Naive thymus-derived CD4-positive, alpha-beta T cell (primary cell): ENCODE measurements at regions of chr3 and their contacts with region 1.

Region 1: GRCh38 chr3:121834696-121835464 is at the starts of genes EAF2 and IQCB1:
- DNase-seq: peak; percentile 93 to 98 (median 97)
- ATAC-seq: peak; percentile 99
- H3K4me3 ChIP-seq: peak within 1 kb of the TSS; percentile 85
- H3K4me3 Mint-ChIP-seq: peak within 1 kb of the TSS; percentile 83 to 97 (median 93)
- H3K27ac ChIP-seq: peak within 1 kb of the TSS; percentile 89
- H3K27ac Mint-ChIP-seq: peak within 1 kb of the TSS; percentile 78 to 98 (median 92)
- H3K4me1 ChIP-seq: peaks cover 10 to 14% of the 10 kb centered on the region in 2 donors
- H3K4me1 Mint-ChIP-seq: peaks cover 32 to 65% (median 58%) of the 10 kb centered on the region in 7 donors
- H3K27me3 ChIP-seq: no peaks in the 10 kb centered on the region
- H3K27me3 Mint-ChIP-seq: no peaks in the 10 kb centered on the region
- total RNA-seq, gene EAF2: 6.4 to 16.1 (median 7.5) TPM
- total RNA-seq, gene IQCB1: 32.6 to 45.6 (median 35.8) TPM

Region 2: DNA sequence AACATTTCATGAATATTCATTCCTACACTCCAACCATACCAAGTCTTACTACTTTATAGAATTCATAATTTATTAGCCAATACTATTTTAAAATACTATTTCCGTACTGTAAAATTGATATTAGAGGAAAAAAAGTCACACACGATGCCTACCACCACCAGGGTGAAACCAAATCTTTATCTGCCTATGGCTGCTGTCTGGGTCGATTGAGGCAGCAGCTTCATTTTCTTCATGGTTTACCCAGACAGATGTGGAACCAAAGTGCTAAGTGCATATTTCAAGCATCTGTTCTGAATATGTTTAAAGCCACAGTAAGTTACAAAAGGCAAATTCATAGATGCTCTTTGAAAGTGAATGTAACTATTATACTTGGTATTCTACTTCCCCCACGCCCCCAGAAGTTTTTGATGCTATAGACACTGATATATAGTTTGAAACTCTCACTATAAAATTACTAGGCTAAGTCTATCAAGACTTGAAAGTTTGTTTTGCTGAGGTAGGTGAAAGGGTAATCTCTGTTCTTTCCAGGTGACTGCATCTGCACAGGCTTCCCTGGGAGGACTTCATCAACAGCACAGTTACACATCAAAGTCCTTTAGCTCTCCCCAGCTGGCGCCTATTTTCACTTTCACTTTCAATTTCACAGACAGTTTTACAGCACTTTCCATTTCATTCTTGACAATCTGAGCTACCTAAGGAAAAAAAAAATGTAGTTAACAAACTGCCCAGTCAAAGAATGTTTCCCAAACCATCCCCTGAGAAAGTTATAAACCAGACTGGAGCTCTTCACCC is 403.0 kb before region 1 on chr3:
- CTCF ChIA-PET with region 1: no interaction called
- POLR2A ChIA-PET with region 1: interaction called, 3 read pairs
- intact Hi-C with region 1: loop called (anchors 2 to 5 kb)
- DNase-seq: peak in 8 of 9 donors; percentile 36 to 80 (median 74)
- ATAC-seq: peak; percentile 89
- H3K4me3 ChIP-seq: peak overlapping the region; percentile 52
- H3K4me3 Mint-ChIP-seq: peak overlapping the region; percentile 46 to 84 (median 76)
- H3K27ac ChIP-seq: peak overlapping the region; percentile 33
- H3K27ac Mint-ChIP-seq: peak overlapping the region; percentile 48 to 92 (median 84)
- H3K4me1 ChIP-seq: peaks cover 0 to 9% of the 10 kb centered on the region in 2 donors
- H3K4me1 Mint-ChIP-seq: peaks cover 6 to 31% (median 24%) of the 10 kb centered on the region in 7 donors
- H3K27me3 ChIP-seq: no peaks in the 10 kb centered on the region
- H3K27me3 Mint-ChIP-seq: no peaks in the 10 kb centered on the region

Region 3: GRCh38 chr3:121796970-121797369 is 37.9 kb before region 1 on chr3:
- CTCF ChIA-PET with region 1: no interaction called
- POLR2A ChIA-PET with region 1: no interaction called
- intact Hi-C with region 1: loop called in 1 of 2 experiments (anchors 5 kb)
- DNase-seq: no peak
- ATAC-seq: no peak
- H3K4me3 ChIP-seq: no peak overlapping the region
- H3K4me3 Mint-ChIP-seq: no peak overlapping the region
- H3K27ac ChIP-seq: no peak overlapping the region
- H3K27ac Mint-ChIP-seq: no peak overlapping the region
- H3K4me1 ChIP-seq: no peaks in the 10 kb centered on the region
- H3K4me1 Mint-ChIP-seq: peaks cover 0 to 6% (median 0%) of the 10 kb centered on the region in 7 donors
- H3K27me3 ChIP-seq: no peaks in the 10 kb centered on the region
- H3K27me3 Mint-ChIP-seq: no peaks in the 10 kb centered on the region

Region 4: DNA sequence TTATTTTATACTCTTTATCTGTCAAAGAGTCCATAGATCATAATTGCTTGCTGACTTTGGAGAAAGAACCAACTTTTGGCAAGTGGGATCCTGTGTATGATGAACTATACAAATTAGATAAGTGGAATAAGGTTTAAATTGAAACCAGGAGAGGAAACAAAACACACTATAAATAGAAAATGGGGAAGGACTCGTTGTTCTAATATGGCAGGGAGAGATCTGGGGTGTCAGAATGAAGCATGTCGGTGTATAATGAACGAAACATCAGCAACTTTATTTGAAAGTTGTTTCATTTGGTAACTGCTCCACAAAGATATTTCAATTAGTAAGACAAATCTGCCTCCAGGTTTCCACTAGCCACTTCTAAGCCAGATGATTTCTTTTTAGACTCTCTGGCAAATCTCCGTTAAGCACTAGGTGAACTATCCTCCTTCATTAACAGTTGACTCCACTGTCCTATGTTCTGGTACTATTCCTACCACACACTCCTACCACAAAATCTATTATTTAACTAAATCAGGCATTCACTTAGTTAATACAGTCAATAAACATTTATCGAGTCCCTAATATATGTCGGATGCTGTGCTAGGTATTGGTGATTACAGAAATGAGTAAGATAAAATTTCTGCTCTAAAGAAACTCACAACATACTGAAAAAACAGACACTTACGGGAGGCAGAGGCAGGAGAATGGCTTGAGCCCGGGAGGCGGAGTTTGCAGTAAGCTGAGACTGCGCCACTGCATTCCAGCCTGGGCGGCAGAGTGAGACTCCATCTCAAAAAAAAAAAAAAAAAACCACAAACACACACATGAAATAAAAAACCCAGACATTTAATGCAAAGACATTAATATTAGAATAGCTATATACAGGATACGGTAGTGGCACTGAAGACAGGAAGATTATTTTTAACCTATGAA is 79.5 kb after region 1 on chr3:
- CTCF ChIA-PET with region 1: no interaction called
- POLR2A ChIA-PET with region 1: no interaction called
- intact Hi-C with region 1: no loop called
- DNase-seq: no peak
- ATAC-seq: no peak
- H3K4me3 ChIP-seq: no peak overlapping the region
- H3K4me3 Mint-ChIP-seq: no peak overlapping the region
- H3K27ac ChIP-seq: no peak overlapping the region
- H3K27ac Mint-ChIP-seq: no peak overlapping the region
- H3K4me1 ChIP-seq: no peaks in the 10 kb centered on the region
- H3K4me1 Mint-ChIP-seq: peaks cover 0 to 1% (median 0%) of the 10 kb centered on the region in 7 donors
- H3K27me3 ChIP-seq: no peaks in the 10 kb centered on the region
- H3K27me3 Mint-ChIP-seq: no peaks in the 10 kb centered on the region

Region 5: DNA sequence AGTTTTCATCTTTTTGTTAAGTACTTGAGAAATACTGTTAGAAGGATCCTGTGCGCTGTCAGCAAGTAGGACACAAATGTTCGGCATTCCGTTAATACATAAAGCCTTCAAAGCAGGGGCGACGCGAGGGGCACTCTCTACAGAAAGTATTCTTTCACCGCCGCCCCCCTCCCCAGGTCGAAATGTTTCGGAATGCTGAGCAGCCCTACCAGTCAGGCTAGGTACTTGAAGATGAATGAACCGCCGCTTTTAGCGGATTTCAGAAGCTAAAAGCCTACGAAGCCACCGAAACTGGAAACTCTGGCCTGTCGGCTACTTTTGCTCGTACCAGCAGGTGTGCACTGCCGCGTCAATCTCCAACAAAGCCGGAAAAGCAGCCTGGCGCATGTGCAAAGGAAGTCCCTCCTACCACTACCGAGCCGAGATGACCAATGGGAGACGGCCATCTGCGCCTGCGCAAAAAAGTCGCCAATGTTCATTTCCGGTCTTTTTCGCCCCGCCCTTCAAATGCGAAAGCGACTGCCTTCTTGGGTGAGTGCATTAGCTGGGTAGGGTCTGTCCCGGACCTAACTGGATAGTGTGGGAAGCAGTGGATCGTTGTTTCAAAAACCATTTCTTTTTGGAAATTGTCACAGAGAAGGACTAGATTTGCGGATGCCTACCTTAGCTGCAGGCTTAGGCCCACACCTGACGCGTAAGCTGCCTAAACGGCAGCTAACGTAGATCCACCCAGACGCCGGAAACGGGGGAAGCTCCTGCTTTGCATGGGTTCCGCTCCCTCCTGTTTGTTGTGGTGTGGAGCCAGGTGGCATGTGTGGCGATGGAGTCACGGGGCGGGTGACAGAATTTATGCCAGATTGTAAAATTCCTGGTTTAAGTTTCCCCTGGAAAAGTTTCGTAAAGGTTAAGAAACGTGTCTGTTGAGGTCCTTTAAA is 581.1 kb after region 1 on chr3 and contains the start of gene WDR5B:
- CTCF ChIA-PET with region 1: no interaction called
- POLR2A ChIA-PET with region 1: no interaction called
- intact Hi-C with region 1: loop called (anchors 1 kb)
- DNase-seq: peak; percentile 95 to 99 (median 99)
- ATAC-seq: peak; percentile 94
- H3K4me3 ChIP-seq: peak within 1 kb of the TSS; percentile 96
- H3K4me3 Mint-ChIP-seq: peak within 1 kb of the TSS; percentile 92 to 99 (median 97)
- H3K27ac ChIP-seq: peak within 1 kb of the TSS; percentile 93
- H3K27ac Mint-ChIP-seq: peak within 1 kb of the TSS; percentile 98 to 100 (median 100)
- H3K4me1 ChIP-seq: peaks cover 19 to 24% of the 10 kb centered on the region in 2 donors
- H3K4me1 Mint-ChIP-seq: peaks cover 24 to 72% (median 65%) of the 10 kb centered on the region in 7 donors
- H3K27me3 ChIP-seq: no peaks in the 10 kb centered on the region
- H3K27me3 Mint-ChIP-seq: peaks cover 0 to 3% (median 0%) of the 10 kb centered on the region in 5 donors
- total RNA-seq, gene WDR5B: 4.8 to 19.4 (median 6.4) TPM

Region 6: DNA sequence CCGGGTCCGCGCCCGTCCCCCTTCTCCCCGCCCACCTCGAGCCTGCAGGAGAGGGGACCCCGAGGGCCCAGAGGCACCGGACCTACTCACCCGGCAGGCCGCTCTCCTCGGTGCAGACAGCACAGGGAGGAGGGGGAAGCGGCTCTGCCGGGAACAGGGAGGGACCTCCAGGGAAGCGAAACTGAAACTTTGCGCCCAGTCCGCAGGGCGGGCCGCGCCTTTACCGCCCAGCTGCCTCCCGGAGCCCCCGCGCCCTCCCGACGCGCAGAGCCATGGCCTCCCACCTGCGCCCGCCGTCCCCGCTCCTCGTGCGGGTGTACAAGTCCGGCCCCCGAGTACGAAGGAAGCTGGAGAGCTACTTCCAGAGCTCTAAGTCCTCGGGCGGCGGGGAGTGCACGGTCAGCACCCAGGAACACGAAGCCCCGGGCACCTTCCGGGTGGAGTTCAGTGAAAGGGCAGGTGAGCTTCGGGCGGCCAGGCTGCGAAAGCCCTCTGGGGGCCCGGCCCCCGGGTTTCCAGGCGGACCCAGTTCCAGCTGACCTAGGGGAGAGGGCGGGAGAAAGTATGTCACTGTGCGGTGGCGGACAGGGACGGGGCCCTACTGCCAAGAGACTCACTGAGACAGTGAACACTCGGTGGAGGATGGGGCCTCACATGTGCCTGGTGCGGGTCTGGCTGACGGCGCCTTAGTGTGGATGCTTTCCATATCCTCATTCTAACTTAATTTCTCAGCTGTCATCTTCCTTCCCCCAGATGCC is 729.5 kb after region 1 on chr3 and contains the starts of genes DTX3L and PARP9:
- CTCF ChIA-PET with region 1: no interaction called
- POLR2A ChIA-PET with region 1: no interaction called
- intact Hi-C with region 1: loop called in 1 of 2 experiments (anchors 5 kb)
- DNase-seq: peak; percentile 50 to 82 (median 77)
- ATAC-seq: peak; percentile 95
- H3K4me3 ChIP-seq: peak within 1 kb of the TSS; percentile 75
- H3K4me3 Mint-ChIP-seq: peak within 1 kb of the TSS; percentile 88 to 100 (median 98)
- H3K27ac ChIP-seq: peak within 1 kb of the TSS; percentile 98
- H3K27ac Mint-ChIP-seq: peak within 1 kb of the TSS; percentile 97 to 99 (median 98)
- H3K4me1 ChIP-seq: peaks cover 34 to 45% of the 10 kb centered on the region in 2 donors
- H3K4me1 Mint-ChIP-seq: peaks cover 58 to 91% (median 79%) of the 10 kb centered on the region in 7 donors
- H3K27me3 ChIP-seq: no peaks in the 10 kb centered on the region
- H3K27me3 Mint-ChIP-seq: no peaks in the 10 kb centered on the region
- total RNA-seq, gene DTX3L: 28.6 to 164 (median 35.8) TPM
- total RNA-seq, gene PARP9: 17.6 to 165 (median 24.4) TPM

Region 7: GRCh38 chr3:123201566-123202427 is 1366.9 kb after region 1 on chr3 and contains the start of gene SEC22A:
- CTCF ChIA-PET with region 1: no interaction called
- POLR2A ChIA-PET with region 1: no interaction called
- intact Hi-C with region 1: loop called in 1 of 2 experiments (anchors 1 kb)
- DNase-seq: peak; percentile 89 to 99 (median 97)
- ATAC-seq: peak; percentile 97
- H3K4me3 ChIP-seq: peak within 1 kb of the TSS; percentile 90
- H3K4me3 Mint-ChIP-seq: peak within 1 kb of the TSS; percentile 82 to 98 (median 92)
- H3K27ac ChIP-seq: peak within 1 kb of the TSS; percentile 99
- H3K27ac Mint-ChIP-seq: peak within 1 kb of the TSS; percentile 97 to 100 (median 99)
- H3K4me1 ChIP-seq: peaks cover 12% of the 10 kb centered on the region in 2 donors
- H3K4me1 Mint-ChIP-seq: peaks cover 13 to 41% (median 31%) of the 10 kb centered on the region in 7 donors
- H3K27me3 ChIP-seq: no peaks in the 10 kb centered on the region
- H3K27me3 Mint-ChIP-seq: peaks cover 0 to 9% (median 2%) of the 10 kb centered on the region in 5 donors
- total RNA-seq, gene SEC22A: 15.0 to 20.1 (median 17.1) TPM